Prostate gland (tissue), 2 donors: ENCODE measurements at regions of chr3 and their contacts with region 1.

Region 1: DNA sequence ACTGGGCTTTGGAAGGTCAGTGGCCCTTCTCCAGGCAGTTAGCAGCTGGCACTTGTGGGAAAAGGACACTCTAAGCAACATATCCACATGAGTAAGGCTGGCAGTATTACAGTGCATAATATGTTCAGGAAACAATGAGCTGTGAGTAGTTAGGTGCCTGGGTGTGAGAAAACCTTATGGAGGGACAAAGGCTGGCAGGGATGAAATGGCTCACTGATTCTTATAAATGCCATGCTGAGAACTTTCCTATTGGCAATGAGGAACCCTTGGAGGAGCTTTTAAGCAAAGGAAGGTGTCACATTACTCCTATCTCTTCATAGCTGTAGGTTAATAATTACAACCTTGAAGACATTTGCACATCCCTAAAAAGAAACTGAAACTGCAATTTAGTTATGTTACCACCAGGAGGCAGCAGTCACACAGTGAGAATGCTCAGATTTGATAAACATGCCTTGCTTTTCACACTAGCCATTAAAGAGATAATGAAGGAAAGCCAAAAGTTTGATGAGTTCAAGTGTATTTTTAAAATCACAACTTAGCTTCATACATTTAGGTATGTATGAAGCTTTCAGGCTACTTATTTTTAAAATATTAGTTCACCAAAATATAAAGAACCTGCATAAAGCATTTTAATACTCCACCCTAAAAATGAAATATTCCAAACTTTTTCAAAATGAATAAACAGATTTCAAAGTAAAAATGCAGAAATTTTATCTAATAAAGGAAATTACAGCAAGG is 136.6 kb upstream of the SLC2A2 start:
- DNase-seq: no peak
- H3K4me3 ChIP-seq: no peak overlapping the region
- H3K27ac ChIP-seq: no peak overlapping the region
- H3K4me1 ChIP-seq: no peaks in the 10 kb centered on the region
- H3K27me3 ChIP-seq: no peaks in the 10 kb centered on the region
- CTCF ChIP-seq: peak in 3 of 4 experiments; percentile 21 to 33 (median 25)
- POLR2A ChIP-seq: no peak

Region 2: GRCh38 chr3:170180908-170181879 is 982.0 kb before region 1 on chr3 and contains the start of gene PHC3:
- intact Hi-C with region 1: no loop called
- DNase-seq: peak; percentile 90
- H3K4me3 ChIP-seq: peak within 1 kb of the TSS; percentile 68 to 83
- H3K27ac ChIP-seq: peak within 1 kb of the TSS; percentile 94 to 97
- H3K4me1 ChIP-seq: no peaks in the 10 kb centered on the region
- H3K27me3 ChIP-seq: no peaks in the 10 kb centered on the region
- CTCF ChIP-seq: peak in 3 of 4 experiments; percentile 46 to 72 (median 55)
- POLR2A ChIP-seq: peak; percentile 73
- total RNA-seq, gene PHC3: 34.5 to 100 TPM

Region 3: GRCh38 chr3:170961616-170962400 is 201.3 kb before region 1 on chr3:
- intact Hi-C with region 1: loop called (anchors 10 kb)
- DNase-seq: no peak
- H3K4me3 ChIP-seq: no peak overlapping the region
- H3K27ac ChIP-seq: no peak overlapping the region
- H3K4me1 ChIP-seq: no peaks in the 10 kb centered on the region
- H3K27me3 ChIP-seq: no peaks in the 10 kb centered on the region
- CTCF ChIP-seq: peak in 3 of 4 experiments; percentile 30 to 73 (median 66)
- POLR2A ChIP-seq: no peak